ENCODE measurements at regions of chr4 and their contacts with region 1.

Region 1: DNA sequence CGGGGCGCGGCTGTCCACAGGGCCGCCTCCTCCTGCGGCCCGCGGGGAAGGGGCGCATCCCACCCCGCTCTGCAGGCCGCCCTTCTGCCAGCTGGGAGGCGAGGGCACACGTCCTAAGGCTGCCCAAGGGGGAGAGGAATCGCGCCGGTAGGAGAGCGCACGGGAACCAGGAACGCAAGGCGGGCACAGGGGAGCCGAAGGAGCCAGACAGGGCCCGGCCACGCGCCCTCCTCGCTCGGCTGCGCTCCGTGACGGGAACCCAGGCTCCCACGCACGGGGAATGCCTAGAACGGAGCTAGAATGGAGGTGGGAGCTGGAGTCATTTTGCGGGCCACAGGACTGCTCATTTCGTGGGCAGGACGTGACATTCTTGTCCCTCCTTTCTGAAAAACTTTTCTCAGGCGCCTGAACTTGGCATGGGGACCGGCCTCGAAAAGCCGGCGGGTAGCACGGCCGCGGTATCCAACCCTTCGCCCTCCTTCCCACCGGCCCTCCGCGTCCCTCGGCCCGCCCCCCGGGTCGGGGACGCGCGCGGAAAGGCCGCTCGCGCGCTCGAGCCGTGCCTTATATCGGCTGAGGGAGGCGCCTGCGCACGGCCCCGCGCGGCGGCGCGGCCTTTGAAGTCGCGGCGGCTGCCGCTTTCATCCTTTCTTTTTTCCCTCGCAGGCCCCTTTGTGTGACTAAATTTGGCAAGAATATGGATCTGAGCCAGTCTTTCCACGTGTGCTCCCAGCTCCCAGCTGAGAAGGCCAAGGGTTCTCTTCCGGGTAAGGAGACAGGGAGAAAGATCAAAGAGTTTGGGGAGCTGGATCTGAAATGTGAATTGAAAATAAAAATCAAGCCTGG is 4.2 kb upstream of the LEF1 start:
- DNase-seq: peak; percentile 63 to 71 (median 69)
- H3K4me3 ChIP-seq: peak overlapping the region; percentile 61 to 79
- H3K4me3 Mint-ChIP-seq: peak overlapping the region; percentile 89 to 96 (median 90)
- H3K27ac ChIP-seq: peak overlapping the region; percentile 50
- H3K27ac Mint-ChIP-seq: peak overlapping the region; percentile 47 to 94 (median 81)
- H3K4me1 ChIP-seq: peaks cover 43% of the 10 kb centered on the region
- H3K4me1 Mint-ChIP-seq: peaks cover 28 to 50% (median 37%) of the 10 kb centered on the region in 4 donors
- H3K27me3 ChIP-seq: peaks cover 14% of the 10 kb centered on the region
- H3K27me3 Mint-ChIP-seq: peaks cover 17 to 25% of the 10 kb centered on the region in 2 donors

Region 2: GRCh38 chr4:108030332-108030731 is 142.6 kb before region 1 on chr4:
- CTCF ChIA-PET with region 1: interaction called, 4 read pairs
- POLR2A ChIA-PET with region 1: interaction called, 4 read pairs
- intact Hi-C with region 1: loop called (anchors 2 kb)
- DNase-seq: peak; percentile 62 to 75 (median 70)
- H3K4me3 ChIP-seq: no peak overlapping the region
- H3K4me3 Mint-ChIP-seq: peak overlapping the region in 5 of 8 donors; percentile 50 to 76 (median 56)
- H3K27ac ChIP-seq: no peak overlapping the region
- H3K27ac Mint-ChIP-seq: peak overlapping the region; percentile 31 to 94 (median 84)
- H3K4me1 ChIP-seq: peaks cover 25% of the 10 kb centered on the region
- H3K4me1 Mint-ChIP-seq: peaks cover 21 to 40% (median 25%) of the 10 kb centered on the region in 4 donors
- H3K27me3 ChIP-seq: no peaks in the 10 kb centered on the region
- H3K27me3 Mint-ChIP-seq: no peaks in the 10 kb centered on the region

Region 3: DNA sequence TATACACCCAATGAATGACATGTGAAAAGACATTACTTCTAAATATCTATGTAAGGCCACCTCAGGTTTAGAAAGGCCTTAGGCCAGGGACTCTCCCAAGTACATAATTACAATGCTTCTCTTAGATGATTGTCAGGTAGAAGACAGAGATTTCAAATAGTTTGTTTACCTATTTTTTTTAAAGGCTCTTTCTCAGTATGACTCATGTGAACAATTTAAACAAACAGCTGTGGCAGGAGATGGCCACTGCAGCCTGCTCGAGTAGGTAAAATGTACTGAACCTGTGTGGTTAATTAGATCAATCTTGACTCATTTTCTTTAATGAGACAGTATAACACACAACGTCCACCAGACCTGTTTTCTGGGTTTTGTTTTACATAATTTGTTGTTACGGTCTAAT is 54.5 kb before region 1 on chr4:
- CTCF ChIA-PET with region 1: interaction called, 4 read pairs
- POLR2A ChIA-PET with region 1: interaction called, 460 read pairs
- intact Hi-C with region 1: no loop called
- DNase-seq: peak in 3 of 5 donors; percentile 23 to 83 (median 48)
- H3K4me3 ChIP-seq: no peak overlapping the region
- H3K4me3 Mint-ChIP-seq: peak overlapping the region in 7 of 8 donors; percentile 11 to 79 (median 75)
- H3K27ac ChIP-seq: peak overlapping the region; percentile 47
- H3K27ac Mint-ChIP-seq: peak overlapping the region; percentile 61 to 94 (median 87)
- H3K4me1 ChIP-seq: peaks cover 100% of the 10 kb centered on the region
- H3K4me1 Mint-ChIP-seq: peaks cover 77 to 93% (median 87%) of the 10 kb centered on the region in 4 donors
- H3K27me3 ChIP-seq: no peaks in the 10 kb centered on the region
- H3K27me3 Mint-ChIP-seq: no peaks in the 10 kb centered on the region

Region 4: GRCh38 chr4:108160741-108161352 is 12.1 kb before region 1 on chr4:
- CTCF ChIA-PET with region 1: interaction called, 6 read pairs
- POLR2A ChIA-PET with region 1: interaction called, 122 read pairs
- intact Hi-C with region 1: loop called (anchors 1 kb)
- DNase-seq: peak; percentile 38 to 50 (median 47)
- H3K4me3 ChIP-seq: peak overlapping the region; percentile 19 to 81
- H3K4me3 Mint-ChIP-seq: peak overlapping the region; percentile 85 to 98 (median 88)
- H3K27ac ChIP-seq: peak overlapping the region; percentile 27
- H3K27ac Mint-ChIP-seq: peak overlapping the region; percentile 19 to 89 (median 75)
- H3K4me1 ChIP-seq: peaks cover 77% of the 10 kb centered on the region
- H3K4me1 Mint-ChIP-seq: peaks cover 30 to 84% (median 47%) of the 10 kb centered on the region in 4 donors
- H3K27me3 ChIP-seq: no peaks in the 10 kb centered on the region
- H3K27me3 Mint-ChIP-seq: no peaks in the 10 kb centered on the region

Region 5: GRCh38 chr4:108433832-108434231 is 260.9 kb after region 1 on chr4:
- CTCF ChIA-PET with region 1: no interaction called
- POLR2A ChIA-PET with region 1: interaction called, 3 read pairs
- intact Hi-C with region 1: loop called (anchors 2 kb)
- DNase-seq: peak; percentile 54 to 71 (median 69)
- H3K4me3 ChIP-seq: peak overlapping the region; percentile 13 to 14
- H3K4me3 Mint-ChIP-seq: peak overlapping the region; percentile 28 to 77 (median 64)
- H3K27ac ChIP-seq: peak overlapping the region; percentile 13
- H3K27ac Mint-ChIP-seq: peak overlapping the region; percentile 61 to 86 (median 80)
- H3K4me1 ChIP-seq: peaks cover 42% of the 10 kb centered on the region
- H3K4me1 Mint-ChIP-seq: peaks cover 35 to 71% (median 43%) of the 10 kb centered on the region in 4 donors
- H3K27me3 ChIP-seq: no peaks in the 10 kb centered on the region
- H3K27me3 Mint-ChIP-seq: no peaks in the 10 kb centered on the region

Region 6: DNA sequence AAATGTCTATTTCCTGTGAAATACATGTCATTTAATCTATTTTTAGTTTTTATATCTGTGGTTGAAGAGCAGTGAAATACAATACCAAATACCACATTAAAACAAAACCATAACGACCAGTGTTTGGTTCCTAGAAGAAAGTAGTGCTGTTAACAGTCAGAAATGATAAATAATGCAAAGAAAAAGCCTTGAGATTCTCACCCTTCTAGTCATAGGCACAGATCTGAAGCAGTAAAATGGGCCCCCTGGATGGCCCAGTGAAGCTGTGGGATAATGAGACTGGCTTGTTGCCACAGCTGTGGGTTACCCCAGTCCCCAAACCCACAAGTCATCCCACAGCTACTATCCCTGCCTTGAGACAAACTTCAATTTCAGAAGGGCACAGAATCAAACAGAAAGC is 310.1 kb after region 1 on chr4:
- CTCF ChIA-PET with region 1: no interaction called
- POLR2A ChIA-PET with region 1: no interaction called
- intact Hi-C with region 1: loop called (anchors 5 kb)
- DNase-seq: peak in 4 of 5 donors; percentile 15 to 42 (median 22)
- H3K4me3 ChIP-seq: peak overlapping the region in 1 of 2 donors; percentile 18
- H3K4me3 Mint-ChIP-seq: peak overlapping the region; percentile 36 to 80 (median 72)
- H3K27ac ChIP-seq: no peak overlapping the region
- H3K27ac Mint-ChIP-seq: peak overlapping the region; percentile 10 to 84 (median 40)
- H3K4me1 ChIP-seq: peaks cover 32% of the 10 kb centered on the region
- H3K4me1 Mint-ChIP-seq: peaks cover 26 to 48% (median 33%) of the 10 kb centered on the region in 4 donors
- H3K27me3 ChIP-seq: no peaks in the 10 kb centered on the region
- H3K27me3 Mint-ChIP-seq: no peaks in the 10 kb centered on the region

Measured in CD4-positive, alpha-beta memory T cell (primary cell).